H1 (cell line): ENCODE measurements at regions of chr9 and their contacts with region 1.

Region 1: DNA sequence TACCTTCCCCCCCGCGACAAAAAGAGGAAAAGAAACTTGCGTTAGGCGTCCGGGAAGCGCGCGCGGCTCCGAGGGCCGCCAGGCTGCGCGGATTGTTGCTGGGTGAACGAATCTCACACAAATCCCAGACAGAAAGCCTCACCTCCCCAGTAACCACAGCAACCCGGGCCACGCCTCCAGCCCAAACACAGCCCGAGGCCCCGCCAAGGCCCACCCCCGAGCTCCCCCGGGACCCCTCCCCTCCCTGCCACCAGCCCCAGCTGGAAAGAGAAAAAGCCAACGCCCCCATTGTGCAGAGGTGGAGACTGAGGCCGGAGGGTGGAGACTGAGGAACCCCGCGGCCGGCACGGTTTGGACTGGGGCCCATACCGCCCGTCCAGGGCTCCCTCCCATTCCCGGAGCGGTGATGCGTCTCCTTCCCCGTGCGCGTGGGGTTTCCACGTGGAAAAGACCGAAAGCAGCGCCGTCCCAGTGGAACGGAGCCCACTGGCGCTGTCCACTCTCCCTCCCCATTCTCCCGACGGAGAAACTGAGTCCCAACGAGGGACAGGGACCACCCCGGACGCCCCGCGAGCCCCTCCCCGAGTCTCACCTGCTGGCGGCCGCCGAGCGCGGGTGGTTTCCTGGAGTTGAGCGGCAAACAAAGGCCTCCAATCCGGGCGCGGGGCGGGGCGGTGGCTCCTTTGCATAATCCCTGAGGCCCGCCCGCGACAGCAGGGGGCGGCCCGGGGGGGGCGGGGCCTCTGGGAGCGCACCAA is 10.2 kb upstream of the AKNA start:
- DNase-seq: peak; percentile 77 to 98
- H3K4me3 ChIP-seq: peak overlapping the region; percentile 55 to 82 (median 70)
- H3K27ac ChIP-seq: peak overlapping the region; percentile 49; the same call in 1 of the 2 replicates
- H3K4me1 ChIP-seq: peaks cover 6 to 17% (median 11%) of the 10 kb centered on the region in 4 experiments; a peak in 6 of 7 replicates
- H3K27me3 ChIP-seq: no peaks in the 10 kb centered on the region
- CTCF ChIP-seq: no peak
- EP300 ChIP-seq: no peak
- POLR2A ChIP-seq: no peak
- RAD21 ChIP-seq: no peak

Region 2: GRCh38 chr9:113868501-113868900 is 529.5 kb before region 1 on chr9:
- CTCF ChIA-PET with region 1: no interaction called
- POLR2A ChIA-PET with region 1: no interaction called
- DNase-seq: no peak
- H3K4me3 ChIP-seq: no peak overlapping the region
- H3K27ac ChIP-seq: no peak overlapping the region
- H3K4me1 ChIP-seq: peaks cover 0 to 2% (median under 1%) of the 10 kb centered on the region in 4 experiments; a peak in 3 of 7 replicates
- H3K27me3 ChIP-seq: peaks cover 0 to 7% (median 1%) of the 10 kb centered on the region in 4 experiments; a peak in 2 of 7 replicates
- CTCF ChIP-seq: no peak
- EP300 ChIP-seq: no peak
- POLR2A ChIP-seq: no peak
- RAD21 ChIP-seq: no peak

Region 3: DNA sequence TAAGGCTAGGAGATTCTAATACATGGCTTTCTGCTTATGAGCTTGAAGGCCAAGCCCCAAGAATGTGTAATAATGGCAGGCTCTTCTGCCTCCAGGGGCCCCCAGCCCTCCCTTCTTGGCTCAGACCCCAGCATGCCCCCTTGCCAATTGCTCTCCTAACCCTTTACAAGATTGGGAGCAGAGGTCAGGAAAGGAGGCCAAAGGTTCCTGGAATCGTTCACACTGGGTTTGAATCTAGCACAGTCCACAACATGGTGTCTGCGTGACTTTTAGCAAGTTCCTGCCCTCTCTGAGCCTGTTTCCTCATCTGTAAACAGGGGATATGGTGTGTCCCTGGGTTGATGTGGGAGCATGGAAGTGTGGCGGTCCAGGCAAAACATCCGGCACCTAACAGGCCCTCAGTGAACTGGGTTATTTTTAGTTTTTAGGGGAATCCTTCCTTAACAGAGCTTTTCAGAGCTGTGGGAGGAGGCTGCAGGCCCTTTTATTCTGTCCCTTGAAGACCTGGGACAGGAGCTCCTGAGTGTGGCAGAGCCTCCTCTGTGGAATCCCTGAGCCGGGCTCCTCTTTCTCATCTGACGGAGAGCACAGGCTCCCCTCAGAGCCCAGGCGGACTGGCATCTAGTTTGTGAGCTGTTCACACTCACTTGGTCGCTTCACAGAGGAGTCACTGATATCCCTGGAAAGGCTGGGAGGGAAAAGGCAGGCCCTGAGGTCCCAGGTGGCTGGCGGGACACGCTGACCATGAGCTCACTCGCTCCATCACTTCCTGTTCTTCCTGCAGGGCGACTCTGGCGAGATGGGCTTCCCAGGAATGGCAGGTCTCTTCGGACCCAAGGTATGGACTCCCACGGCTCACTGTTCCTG is 98.5 kb before region 1 on chr9:
- CTCF ChIA-PET with region 1: no interaction called
- POLR2A ChIA-PET with region 1: no interaction called
- DNase-seq: peak in 1 of 2 experiments; percentile 39
- H3K4me3 ChIP-seq: no peak overlapping the region
- H3K27ac ChIP-seq: no peak overlapping the region
- H3K4me1 ChIP-seq: no peaks in the 10 kb centered on the region
- H3K27me3 ChIP-seq: no peaks in the 10 kb centered on the region
- CTCF ChIP-seq: no peak
- EP300 ChIP-seq: no peak
- POLR2A ChIP-seq: no peak
- RAD21 ChIP-seq: no peak

Region 4: GRCh38 chr9:114372921-114373448 is 25.0 kb before region 1 on chr9:
- CTCF ChIA-PET with region 1: interaction called, 3 read pairs
- POLR2A ChIA-PET with region 1: interaction called, 16 read pairs
- DNase-seq: no peak
- H3K4me3 ChIP-seq: no peak overlapping the region
- H3K27ac ChIP-seq: no peak overlapping the region
- H3K4me1 ChIP-seq: peaks cover 7 to 30% (median 22%) of the 10 kb centered on the region in 4 experiments
- H3K27me3 ChIP-seq: no peaks in the 10 kb centered on the region
- CTCF ChIP-seq: no peak
- EP300 ChIP-seq: no peak
- POLR2A ChIP-seq: no peak
- RAD21 ChIP-seq: no peak

Region 5: DNA sequence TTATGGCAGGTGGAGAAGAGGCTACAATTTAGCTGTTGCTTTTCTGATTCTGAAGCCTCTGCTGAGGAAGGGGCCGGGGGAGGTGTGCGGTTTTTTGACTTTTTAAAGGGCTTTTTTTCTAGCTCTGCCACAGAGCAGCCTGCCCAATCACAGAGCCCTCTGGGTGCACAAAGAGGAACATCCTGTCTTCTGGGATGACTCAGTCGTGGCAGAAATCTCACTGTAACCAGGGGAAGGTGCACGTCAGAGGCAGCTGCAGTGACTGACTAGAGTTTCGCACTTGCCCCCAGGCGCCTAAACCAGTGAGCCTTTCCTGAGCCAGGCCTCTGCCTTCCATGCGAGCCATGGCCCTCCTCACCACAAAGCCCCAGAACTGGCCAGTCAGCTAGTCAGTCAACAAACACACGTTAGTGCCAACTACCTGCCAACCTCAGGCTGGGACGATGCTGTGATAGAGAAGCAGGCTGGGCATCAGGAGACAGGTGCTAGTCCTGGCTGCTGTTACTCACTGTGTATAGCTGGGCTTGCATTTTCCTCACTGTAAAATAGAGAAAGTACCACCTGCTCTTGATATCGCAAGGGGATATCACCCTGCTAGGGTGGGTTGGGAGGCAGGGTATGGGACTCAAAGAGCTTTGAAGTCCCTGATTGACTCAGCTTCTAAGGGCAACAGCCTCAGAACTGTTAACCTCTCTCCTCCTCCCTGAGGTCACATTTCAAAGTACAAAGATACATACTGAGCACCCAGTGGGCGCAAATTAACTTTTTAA is 12.4 kb before region 1 on chr9:
- CTCF ChIA-PET with region 1: interaction called, 7 read pairs
- POLR2A ChIA-PET with region 1: interaction called, 38 read pairs
- DNase-seq: no peak
- H3K4me3 ChIP-seq: no peak overlapping the region
- H3K27ac ChIP-seq: no peak overlapping the region; the same call in 1 of the 2 replicates
- H3K4me1 ChIP-seq: peaks cover 19 to 55% (median 39%) of the 10 kb centered on the region in 4 experiments
- H3K27me3 ChIP-seq: no peaks in the 10 kb centered on the region; a peak in 1 of 7 replicates
- CTCF ChIP-seq: no peak
- EP300 ChIP-seq: no peak
- POLR2A ChIP-seq: no peak
- RAD21 ChIP-seq: no peak

Region 6: DNA sequence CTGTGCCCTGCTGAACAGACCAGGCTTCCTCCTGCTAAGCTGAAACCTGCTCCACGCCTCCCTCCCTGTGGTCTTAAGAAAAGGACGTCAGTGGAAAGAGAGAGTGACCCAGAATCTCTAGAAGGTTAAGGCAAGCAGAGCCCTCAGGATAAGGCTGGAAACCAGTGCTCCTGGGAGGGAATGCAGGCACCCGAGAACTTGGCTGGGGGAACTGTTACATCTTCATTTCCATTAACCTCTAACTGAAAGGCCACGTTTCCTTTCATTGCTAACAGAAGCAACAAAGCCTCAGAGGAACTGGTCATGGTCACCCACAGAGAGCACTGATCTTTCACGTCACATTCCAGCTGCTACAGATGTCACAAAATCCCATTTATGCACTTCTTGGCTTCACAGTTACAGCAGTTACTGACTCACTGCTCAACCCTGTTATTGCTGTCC is 15.9 kb after region 1 on chr9:
- CTCF ChIA-PET with region 1: interaction called, 271 read pairs
- POLR2A ChIA-PET with region 1: interaction called, 12 read pairs
- DNase-seq: no peak
- H3K4me3 ChIP-seq: no peak overlapping the region
- H3K27ac ChIP-seq: no peak overlapping the region
- H3K4me1 ChIP-seq: peaks cover 5 to 12% (median 7%) of the 10 kb centered on the region in 4 experiments
- H3K27me3 ChIP-seq: no peaks in the 10 kb centered on the region
- CTCF ChIP-seq: no peak
- EP300 ChIP-seq: no peak
- POLR2A ChIP-seq: no peak
- RAD21 ChIP-seq: no peak

Region 7: GRCh38 chr9:114452219-114453165 is 54.5 kb after region 1 on chr9:
- CTCF ChIA-PET with region 1: no interaction called
- POLR2A ChIA-PET with region 1: no interaction called
- DNase-seq: no peak
- H3K4me3 ChIP-seq: no peak overlapping the region
- H3K27ac ChIP-seq: no peak overlapping the region
- H3K4me1 ChIP-seq: peaks cover 1 to 6% (median 4%) of the 10 kb centered on the region in 4 experiments; a peak in 3 of 7 replicates
- H3K27me3 ChIP-seq: no peaks in the 10 kb centered on the region
- CTCF ChIP-seq: no peak
- EP300 ChIP-seq: no peak
- POLR2A ChIP-seq: no peak
- RAD21 ChIP-seq: no peak